ENCODE measurements at regions of chr1 and their contacts with region 1.

Region 1: GRCh38 chr1:205750138-205751035 is at the start of gene NUCKS1:
- DNase-seq: peak; percentile 100
- H3K4me3 ChIP-seq: peak within 1 kb of the TSS; percentile 91 to 99
- H3K27ac ChIP-seq: peak within 1 kb of the TSS; percentile 98 to 99
- H3K4me1 ChIP-seq: peaks cover 0 to 30% (median 20%) of the 10 kb centered on the region in 4 donors
- H3K27me3 ChIP-seq: no peaks in the 10 kb centered on the region
- CTCF ChIP-seq: no peak

Region 2: GRCh38 chr1:205812878-205813754 is 62.7 kb after region 1 on chr1 and contains the start of gene SLC41A1:
- intact Hi-C with region 1: loop called (anchors 10 kb)
- DNase-seq: peak; percentile 96 to 98
- H3K4me3 ChIP-seq: peak within 1 kb of the TSS; percentile 93 to 97
- H3K27ac ChIP-seq: peak within 1 kb of the TSS; percentile 91 to 93
- H3K4me1 ChIP-seq: peaks cover 0 to 51% (median 39%) of the 10 kb centered on the region in 4 donors
- H3K27me3 ChIP-seq: no peaks in the 10 kb centered on the region
- CTCF ChIP-seq: peak in 1 of 2 experiments; percentile 8